ENCODE measurements at regions of chr17 and their contacts with region 1.

Region 1: GRCh38 chr17:74368092-74369081 is 1.1 kb downstream of the GPR142 start:
- DNase-seq: peak; percentile 80
- H3K4me3 ChIP-seq: no peak overlapping the region
- H3K27ac ChIP-seq: no peak overlapping the region
- H3K4me1 ChIP-seq: peaks cover 15% of the 10 kb centered on the region
- H3K27me3 ChIP-seq: no peaks in the 10 kb centered on the region
- CTCF ChIP-seq: peak; percentile 96

Region 2: DNA sequence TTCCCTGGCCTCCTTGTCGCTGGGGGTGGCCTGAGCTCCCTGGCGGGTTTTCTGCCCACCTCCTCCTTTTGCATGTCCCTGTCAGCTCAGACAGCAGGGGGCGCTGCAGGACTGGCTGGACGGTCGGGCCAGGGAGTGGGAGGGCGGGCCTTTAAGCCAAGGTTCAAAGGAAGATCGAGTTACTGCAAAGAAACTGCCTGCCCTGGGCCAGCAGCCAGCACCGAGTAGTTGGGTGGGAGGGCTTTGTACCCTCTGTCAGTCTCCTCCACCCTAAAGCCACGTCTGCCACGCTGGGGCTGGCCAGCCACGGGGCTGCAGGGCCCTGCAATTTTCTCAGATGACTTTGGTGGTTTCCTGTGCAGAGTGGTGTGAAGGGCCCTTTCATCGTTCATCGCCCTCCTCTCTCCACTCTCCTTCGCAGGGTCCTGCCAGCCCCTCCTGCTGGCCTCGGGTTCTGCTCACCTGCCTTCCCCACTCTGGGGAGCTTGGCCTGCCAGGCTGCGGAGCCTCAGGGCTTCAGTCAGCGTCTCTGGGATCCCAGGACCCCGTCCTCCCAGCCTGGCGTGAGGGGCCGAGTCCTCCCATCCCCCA is 11.2 kb after region 1 on chr17:
- CTCF ChIA-PET with region 1: interaction called, 11 read pairs
- POLR2A ChIA-PET with region 1: no interaction called
- intact Hi-C with region 1: no loop called
- DNase-seq: peak; percentile 87
- H3K4me3 ChIP-seq: peak overlapping the region; percentile 9
- H3K27ac ChIP-seq: peak overlapping the region; percentile 13
- H3K4me1 ChIP-seq: peaks cover 23% of the 10 kb centered on the region
- H3K27me3 ChIP-seq: no peaks in the 10 kb centered on the region
- CTCF ChIP-seq: peak; percentile 92

Region 3: DNA sequence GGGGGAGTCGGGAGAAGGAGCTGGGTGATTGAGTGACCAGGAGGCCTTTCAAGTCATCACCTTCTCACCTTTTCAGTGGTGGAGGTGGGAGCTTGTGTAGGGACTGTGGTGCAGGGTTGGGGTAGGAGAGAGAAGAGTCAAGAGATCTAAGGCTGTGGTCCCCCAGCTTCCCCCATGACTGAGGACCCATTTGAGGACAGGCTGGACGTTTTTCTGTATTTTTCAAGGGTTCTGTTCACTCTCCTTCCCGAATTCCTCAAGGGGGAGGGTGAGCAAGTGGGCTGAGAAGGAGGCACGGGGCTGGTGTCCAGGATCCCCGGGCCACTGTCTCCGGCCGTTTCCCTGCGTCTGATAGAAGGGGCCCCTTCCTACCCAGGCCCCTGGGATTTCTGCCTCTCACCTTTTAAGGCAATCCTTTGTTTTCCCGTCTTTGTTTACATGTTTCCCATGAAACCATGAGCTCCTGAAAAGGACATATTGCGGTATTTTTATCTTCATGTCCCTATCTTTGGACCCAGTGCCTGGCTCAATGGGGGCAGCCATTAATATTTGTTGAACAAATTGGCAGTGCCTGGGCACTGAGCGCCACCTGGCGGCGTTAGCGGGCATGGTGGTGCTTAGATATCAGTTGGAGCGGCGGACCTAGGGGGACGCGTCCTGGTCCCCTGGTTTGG is 88.9 kb after region 1 on chr17:
- CTCF ChIA-PET with region 1: interaction called, 6 read pairs
- POLR2A ChIA-PET with region 1: no interaction called
- intact Hi-C with region 1: loop called (anchors 1 kb)
- DNase-seq: peak; percentile 81
- H3K4me3 ChIP-seq: no peak overlapping the region
- H3K27ac ChIP-seq: no peak overlapping the region
- H3K4me1 ChIP-seq: peaks cover 37% of the 10 kb centered on the region
- H3K27me3 ChIP-seq: no peaks in the 10 kb centered on the region
- CTCF ChIP-seq: peak; percentile 97

Region 4: DNA sequence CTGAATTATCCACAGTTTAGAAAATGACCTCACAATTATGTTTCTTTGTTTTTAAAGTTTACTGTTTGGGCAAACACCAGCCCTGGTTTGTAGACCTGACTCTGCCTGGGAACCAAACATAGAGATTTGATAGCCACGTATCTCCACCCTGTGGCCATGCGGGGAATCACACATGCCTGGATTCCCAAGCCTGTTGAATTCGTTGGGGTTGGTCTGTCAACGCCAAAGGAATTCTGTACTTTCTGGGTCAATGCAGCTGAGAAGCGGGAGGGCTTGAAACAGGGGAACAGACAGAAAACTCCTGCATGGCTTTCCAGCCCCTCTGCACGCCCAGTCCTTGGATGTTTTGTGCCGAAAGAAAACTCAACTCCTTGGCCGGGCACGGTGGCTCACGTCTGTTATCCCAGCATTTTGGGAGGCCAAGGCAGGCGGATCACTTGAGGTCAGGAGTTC is 125.0 kb after region 1 on chr17:
- CTCF ChIA-PET with region 1: interaction called, 5 read pairs
- POLR2A ChIA-PET with region 1: no interaction called
- intact Hi-C with region 1: loop called (anchors 2 kb)
- DNase-seq: peak; percentile 70
- H3K4me3 ChIP-seq: no peak overlapping the region
- H3K27ac ChIP-seq: no peak overlapping the region
- H3K4me1 ChIP-seq: no peaks in the 10 kb centered on the region
- H3K27me3 ChIP-seq: peaks cover 11% of the 10 kb centered on the region
- CTCF ChIP-seq: peak; percentile 85

Region 5: DNA sequence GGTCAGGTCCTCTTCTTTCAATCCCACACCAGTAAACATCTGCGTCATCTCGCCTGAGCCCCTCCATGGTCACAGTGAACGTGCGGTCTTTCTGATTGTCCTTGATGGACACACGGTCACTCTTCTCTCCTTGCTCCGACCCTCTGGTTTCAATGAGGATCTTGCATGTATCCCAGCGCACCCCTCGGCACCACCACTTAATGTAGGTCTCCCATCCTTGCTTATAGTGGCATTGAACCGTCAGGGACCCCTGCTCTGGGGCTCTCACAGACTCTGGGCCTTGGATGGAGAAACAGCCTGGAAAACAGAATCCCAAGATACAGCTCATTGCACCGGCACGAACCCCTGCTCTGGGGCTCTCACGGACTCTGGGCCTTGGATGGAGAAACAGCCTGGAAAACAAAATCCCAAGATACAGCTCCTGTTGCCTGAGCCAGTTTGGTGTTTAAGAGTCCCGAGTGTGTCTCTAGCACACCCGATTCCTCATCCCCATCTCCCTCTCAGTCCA is 157.4 kb after region 1 on chr17:
- CTCF ChIA-PET with region 1: no interaction called
- POLR2A ChIA-PET with region 1: no interaction called
- intact Hi-C with region 1: no loop called
- DNase-seq: no peak
- H3K4me3 ChIP-seq: no peak overlapping the region
- H3K27ac ChIP-seq: no peak overlapping the region
- H3K4me1 ChIP-seq: no peaks in the 10 kb centered on the region
- H3K27me3 ChIP-seq: peaks cover 52% of the 10 kb centered on the region
- CTCF ChIP-seq: no peak

Region 6: GRCh38 chr17:74601944-74602572 is 233.7 kb after region 1 on chr17:
- CTCF ChIA-PET with region 1: interaction called, 4 read pairs
- POLR2A ChIA-PET with region 1: no interaction called
- intact Hi-C with region 1: loop called (anchors 10 kb)
- DNase-seq: peak; percentile 18
- H3K4me3 ChIP-seq: no peak overlapping the region
- H3K27ac ChIP-seq: no peak overlapping the region
- H3K4me1 ChIP-seq: no peaks in the 10 kb centered on the region
- H3K27me3 ChIP-seq: peaks cover 29% of the 10 kb centered on the region
- CTCF ChIP-seq: peak; percentile 64